GM18951 (cell line): ENCODE measurements at regions of chr16 and their contacts with region 1.

Region 1: DNA sequence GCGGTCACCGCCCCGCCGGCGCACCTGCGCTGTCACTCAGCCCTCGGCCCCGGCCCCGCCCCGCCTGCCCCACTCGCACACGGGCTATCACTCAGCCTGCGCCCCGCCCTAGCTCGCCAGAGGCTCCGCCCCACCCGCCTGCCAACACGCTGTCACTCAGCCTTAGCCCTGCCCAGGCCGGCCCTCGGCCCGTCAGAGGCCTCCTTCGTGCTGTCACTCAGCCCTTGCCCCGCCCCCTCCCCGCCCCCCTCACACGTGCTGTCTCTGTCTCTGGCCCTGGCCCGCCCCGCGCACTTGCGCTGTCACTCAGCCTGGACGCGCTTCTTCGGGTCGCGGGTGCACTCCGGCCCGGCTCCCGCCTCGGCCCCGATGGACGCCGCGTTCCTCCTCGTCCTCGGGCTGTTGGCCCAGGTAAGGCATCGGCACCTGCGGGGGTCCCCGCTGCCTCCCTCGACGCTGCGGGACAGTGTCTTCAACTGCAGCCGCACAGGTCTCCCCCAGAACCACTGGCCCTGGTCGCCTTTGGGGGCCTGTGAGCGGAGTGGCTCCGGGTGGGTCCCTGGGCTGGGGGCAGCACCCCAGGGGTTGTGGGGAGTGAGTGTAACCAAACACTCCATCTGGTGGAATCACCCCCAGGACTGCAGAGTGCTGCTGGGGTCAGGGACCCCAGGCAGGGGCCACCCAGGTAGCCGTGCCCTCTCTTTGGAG is at the start of gene CDH15:
- POLR2A ChIP-seq: no peak

Region 2: GRCh38 chr16:88941913-88942909 is 229.4 kb before region 1 on chr16:
- in situ Hi-C with region 1: loop called (anchors 25 kb)
- POLR2A ChIP-seq: peak; percentile 38